ENCODE measurements at regions of chr15 and their contacts with region 1.

Region 1: GRCh38 chr15:32657198-32657883 is 15.8 kb downstream of the SCG5 start:
- DNase-seq: peak; percentile 13
- ATAC-seq: peak; percentile 81
- H3K4me3 Mint-ChIP-seq: no peak overlapping the region
- H3K27ac Mint-ChIP-seq: no peak overlapping the region
- H3K4me1 Mint-ChIP-seq: peaks cover 7% of the 10 kb centered on the region
- H3K27me3 Mint-ChIP-seq: no peaks in the 10 kb centered on the region

Region 2: GRCh38 chr15:32736005-32736700 is 78.8 kb after region 1 on chr15:
- CTCF ChIA-PET with region 1: no interaction called
- POLR2A ChIA-PET with region 1: no interaction called
- intact Hi-C with region 1: no loop called
- DNase-seq: no peak
- ATAC-seq: no peak
- H3K4me3 Mint-ChIP-seq: no peak overlapping the region
- H3K27ac Mint-ChIP-seq: no peak overlapping the region
- H3K4me1 Mint-ChIP-seq: no peaks in the 10 kb centered on the region
- H3K27me3 Mint-ChIP-seq: peaks cover 40% of the 10 kb centered on the region

Region 3: DNA sequence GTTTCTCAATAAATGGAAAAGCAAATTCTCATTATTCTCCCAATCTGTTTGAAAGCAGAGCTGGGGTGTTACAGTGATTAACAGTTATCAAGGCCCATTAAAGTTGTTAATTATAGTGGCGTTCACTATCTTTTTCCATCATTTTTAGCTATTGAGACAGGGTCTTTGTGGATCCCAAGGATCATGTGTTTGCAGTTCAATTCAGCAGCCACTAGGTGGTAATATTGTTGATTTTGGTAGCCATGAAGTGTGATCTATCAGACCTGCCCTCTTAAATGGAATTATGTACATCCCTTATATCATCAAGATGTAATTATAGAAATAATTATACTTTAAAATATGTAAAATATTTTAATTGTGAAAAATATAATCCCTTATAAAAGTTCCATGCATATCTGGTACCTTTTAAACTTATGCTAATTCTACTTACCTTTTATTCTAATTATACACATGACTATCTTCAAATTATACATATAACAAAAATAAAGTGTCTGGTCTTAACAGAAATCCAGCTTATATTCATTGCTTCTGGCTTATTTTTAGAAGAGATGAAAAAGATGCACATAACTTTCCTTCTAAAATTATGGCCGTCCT is 186.9 kb after region 1 on chr15:
- CTCF ChIA-PET with region 1: interaction called, 4 read pairs
- POLR2A ChIA-PET with region 1: no interaction called
- intact Hi-C with region 1: loop called in 1 of 2 experiments (anchors 5 kb)
- DNase-seq: no peak
- ATAC-seq: no peak
- H3K4me3 Mint-ChIP-seq: no peak overlapping the region
- H3K27ac Mint-ChIP-seq: no peak overlapping the region
- H3K4me1 Mint-ChIP-seq: no peaks in the 10 kb centered on the region
- H3K27me3 Mint-ChIP-seq: peaks cover 4% of the 10 kb centered on the region

Region 4: DNA sequence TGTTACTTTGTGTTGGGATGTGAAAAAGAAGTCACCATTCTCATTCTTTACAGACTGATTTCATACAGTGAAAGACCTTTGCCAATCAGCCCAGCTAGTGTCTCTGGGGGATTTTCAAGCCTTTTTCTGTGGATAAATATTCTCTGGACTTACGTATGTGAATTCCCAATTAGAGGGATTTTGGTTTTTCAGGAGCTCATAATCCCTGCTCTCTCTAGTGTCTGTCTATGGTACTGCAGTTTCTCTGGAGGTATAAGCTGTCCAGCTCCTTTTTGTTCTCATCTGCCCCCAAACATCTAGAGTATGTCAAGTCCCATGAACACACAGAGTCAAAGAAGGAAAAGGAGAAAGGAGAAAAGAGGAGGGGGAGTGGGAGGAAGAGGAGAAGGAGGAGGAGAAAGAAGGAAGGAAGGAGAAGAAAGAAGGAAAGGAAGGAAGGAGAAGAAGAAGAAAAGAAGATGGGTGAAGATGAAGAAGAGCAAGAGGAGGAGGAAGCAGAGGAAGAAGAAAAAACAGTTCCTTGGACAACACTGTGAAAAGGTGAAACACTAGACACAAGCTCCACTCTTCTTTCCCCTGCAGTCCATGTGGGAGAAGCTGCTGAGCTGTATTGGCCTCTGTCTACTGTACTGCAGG is 279.1 kb after region 1 on chr15:
- CTCF ChIA-PET with region 1: no interaction called
- POLR2A ChIA-PET with region 1: no interaction called
- intact Hi-C with region 1: loop called in 1 of 2 experiments (anchors 1 kb)
- DNase-seq: no peak
- ATAC-seq: no peak
- H3K4me3 Mint-ChIP-seq: no peak overlapping the region
- H3K27ac Mint-ChIP-seq: no peak overlapping the region
- H3K4me1 Mint-ChIP-seq: no peaks in the 10 kb centered on the region
- H3K27me3 Mint-ChIP-seq: peaks cover 12% of the 10 kb centered on the region

Region 5: GRCh38 chr15:32956006-32956405 is 298.7 kb after region 1 on chr15:
- CTCF ChIA-PET with region 1: no interaction called
- POLR2A ChIA-PET with region 1: no interaction called
- intact Hi-C with region 1: loop called in 1 of 2 experiments (anchors 5 kb)
- DNase-seq: no peak
- ATAC-seq: no peak
- H3K4me3 Mint-ChIP-seq: no peak overlapping the region
- H3K27ac Mint-ChIP-seq: no peak overlapping the region
- H3K4me1 Mint-ChIP-seq: no peaks in the 10 kb centered on the region
- H3K27me3 Mint-ChIP-seq: peaks cover 2% of the 10 kb centered on the region

Region 6: GRCh38 chr15:32994810-32995424 is 337.6 kb after region 1 on chr15:
- CTCF ChIA-PET with region 1: interaction called, 20 read pairs
- POLR2A ChIA-PET with region 1: no interaction called
- intact Hi-C with region 1: loop called (anchors 1 to 2 kb)
- DNase-seq: no peak
- ATAC-seq: no peak
- H3K4me3 Mint-ChIP-seq: no peak overlapping the region
- H3K27ac Mint-ChIP-seq: no peak overlapping the region
- H3K4me1 Mint-ChIP-seq: no peaks in the 10 kb centered on the region
- H3K27me3 Mint-ChIP-seq: peaks cover 3% of the 10 kb centered on the region

Region 7: GRCh38 chr15:33132722-33133345 is 475.5 kb after region 1 on chr15:
- CTCF ChIA-PET with region 1: no interaction called
- POLR2A ChIA-PET with region 1: no interaction called
- intact Hi-C with region 1: loop called in 1 of 2 experiments (anchors 10 kb)
- DNase-seq: peak; percentile 21
- ATAC-seq: peak; percentile 39
- H3K4me3 Mint-ChIP-seq: no peak overlapping the region
- H3K27ac Mint-ChIP-seq: no peak overlapping the region
- H3K4me1 Mint-ChIP-seq: peaks cover 1% of the 10 kb centered on the region
- H3K27me3 Mint-ChIP-seq: no peaks in the 10 kb centered on the region

Measured in activated CD4-positive, alpha-beta T cell treated with anti-CD3 and anti-CD28 coated beads for 36 hours (primary cell).